Left ventricle myocardium superior (tissue), 1 donor: ENCODE measurements at regions of chr18 and their contacts with region 1.

Region 1: GRCh38 chr18:7657050-7657449 is 89.9 kb downstream of the PTPRM start:
- DNase-seq: peak; percentile 54
- ATAC-seq: peak; percentile 98

Region 2: GRCh38 chr18:7011172-7011571 is 645.9 kb before region 1 on chr18:
- intact Hi-C with region 1: no loop called
- DNase-seq: no peak
- ATAC-seq: no peak

Region 3: GRCh38 chr18:7601246-7601615 is 55.8 kb before region 1 on chr18:
- intact Hi-C with region 1: no loop called
- DNase-seq: no peak
- ATAC-seq: peak; percentile 46

Region 4: GRCh38 chr18:7684976-7685375 is 27.9 kb after region 1 on chr18:
- intact Hi-C with region 1: loop called (anchors 2 kb)
- DNase-seq: no peak
- ATAC-seq: no peak